ENCODE measurements at regions of chr13 and their contacts with region 1.

Region 1: GRCh38 chr13:25286969-25287961 is at the start of gene MTMR6:
- DNase-seq: peak; percentile 89
- H3K4me3 Mint-ChIP-seq: peak within 1 kb of the TSS; percentile 95
- H3K27ac Mint-ChIP-seq: peak within 1 kb of the TSS; percentile 95
- H3K4me1 Mint-ChIP-seq: no peaks in the 10 kb centered on the region
- H3K27me3 Mint-ChIP-seq: no peaks in the 10 kb centered on the region
- CTCF ChIP-seq: peak; percentile 95
- total RNA-seq, gene MTMR6: 7.0 and 7.1 TPM in 2 replicates

Region 2: DNA sequence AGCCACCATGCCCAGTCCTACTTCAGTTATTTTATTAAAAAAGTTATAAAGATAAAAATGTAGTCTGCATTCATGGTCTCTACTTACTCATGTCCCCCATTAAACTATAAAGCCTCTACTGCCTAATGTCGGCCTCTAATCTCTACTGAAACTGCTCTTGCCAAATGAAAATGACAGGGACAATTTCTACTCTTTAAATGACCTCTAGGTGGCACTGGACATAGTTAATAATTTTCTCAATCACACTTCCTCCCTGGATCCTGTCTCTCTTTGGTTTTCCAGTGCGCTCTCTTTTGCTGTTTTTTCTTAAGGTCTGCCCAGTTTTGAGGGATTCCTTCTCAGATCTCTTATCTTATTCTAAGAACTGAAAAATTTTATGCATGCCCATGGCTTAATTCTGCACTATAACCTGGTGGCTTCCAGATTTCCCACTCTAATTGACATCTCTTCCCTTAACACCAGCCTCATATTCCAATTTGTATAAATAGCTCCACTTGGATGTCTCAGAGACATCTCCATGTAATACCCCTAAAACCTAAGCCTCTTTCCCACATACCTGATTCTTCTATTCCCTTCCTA is 54.2 kb before region 1 on chr13:
- CTCF ChIA-PET with region 1: no interaction called
- intact Hi-C with region 1: loop called (anchors 5 kb)
- DNase-seq: no peak
- H3K4me3 Mint-ChIP-seq: no peak overlapping the region
- H3K27ac Mint-ChIP-seq: no peak overlapping the region
- H3K4me1 Mint-ChIP-seq: peaks cover 12% of the 10 kb centered on the region
- H3K27me3 Mint-ChIP-seq: peaks cover 31% of the 10 kb centered on the region
- CTCF ChIP-seq: no peak

Region 3: DNA sequence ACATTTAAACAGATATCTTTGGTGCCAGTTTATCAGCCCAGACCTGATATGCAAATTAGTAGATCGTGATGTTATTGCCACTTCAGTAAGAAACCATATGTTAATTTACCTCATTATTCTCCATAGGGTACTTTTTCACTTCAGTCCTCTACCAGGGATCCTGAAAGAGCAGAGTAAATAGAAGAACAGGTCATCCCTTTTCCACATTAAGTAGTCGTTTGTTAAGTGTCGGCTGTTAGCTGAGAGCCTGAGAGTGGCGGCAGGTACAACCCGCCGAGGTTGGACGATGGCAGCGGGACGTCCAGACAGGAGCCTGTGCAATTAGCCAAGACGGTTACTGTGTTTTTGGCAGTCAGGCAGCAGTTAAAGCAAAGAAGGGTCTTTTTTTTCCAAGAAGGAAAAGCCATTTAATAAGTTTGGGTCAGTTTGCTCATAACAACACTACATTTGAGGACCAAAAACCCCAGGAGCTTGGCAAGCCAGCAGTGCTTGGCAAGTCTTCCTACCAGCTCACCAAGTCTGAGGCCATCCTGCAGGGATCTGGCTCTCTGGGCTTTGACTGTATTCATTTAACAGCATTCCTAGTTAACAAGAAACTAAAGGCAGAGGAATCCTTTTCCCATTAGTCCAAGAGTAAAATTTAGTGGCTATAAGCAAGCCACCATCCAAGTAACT is 532.7 kb after region 1 on chr13:
- CTCF ChIA-PET with region 1: no interaction called
- intact Hi-C with region 1: no loop called
- DNase-seq: no peak
- H3K4me3 Mint-ChIP-seq: no peak overlapping the region
- H3K27ac Mint-ChIP-seq: no peak overlapping the region
- H3K4me1 Mint-ChIP-seq: no peaks in the 10 kb centered on the region
- H3K27me3 Mint-ChIP-seq: no peaks in the 10 kb centered on the region
- CTCF ChIP-seq: no peak